Right cardiac atrium (tissue), 5 donors: ENCODE measurements at regions of chr11 and their contacts with region 1.

Region 1: GRCh38 chr11:61679893-61680621 is at the start of gene DAGLA:
- DNase-seq: peak; percentile 68 to 90 (median 89)
- ATAC-seq: peak; percentile 73 to 80
- H3K4me3 ChIP-seq: peak within 1 kb of the TSS; percentile 55
- H3K27ac ChIP-seq: no peak within 1 kb of the TSS
- H3K4me1 ChIP-seq: peaks cover 7% of the 10 kb centered on the region
- H3K27me3 ChIP-seq: no peaks in the 10 kb centered on the region
- total RNA-seq, gene DAGLA: 4.1 to 7.2 (median 6.1) TPM

Region 2: GRCh38 chr11:61446211-61446651 is 233.8 kb before region 1 on chr11:
- intact Hi-C with region 1: no loop called
- DNase-seq: peak; percentile 93 to 97 (median 96)
- ATAC-seq: peak; percentile 89
- H3K4me3 ChIP-seq: no peak overlapping the region
- H3K27ac ChIP-seq: peak overlapping the region; percentile 78
- H3K4me1 ChIP-seq: peaks cover 9% of the 10 kb centered on the region
- H3K27me3 ChIP-seq: no peaks in the 10 kb centered on the region

Region 3: GRCh38 chr11:61733120-61733978 is 53.3 kb after region 1 on chr11:
- intact Hi-C with region 1: loop called (anchors 2 to 5 kb)
- DNase-seq: peak; percentile 88 to 97 (median 95)
- ATAC-seq: peak; percentile 77 to 79
- H3K4me3 ChIP-seq: no peak overlapping the region
- H3K27ac ChIP-seq: peak overlapping the region; percentile 46
- H3K4me1 ChIP-seq: peaks cover 3% of the 10 kb centered on the region
- H3K27me3 ChIP-seq: no peaks in the 10 kb centered on the region

Region 4: DNA sequence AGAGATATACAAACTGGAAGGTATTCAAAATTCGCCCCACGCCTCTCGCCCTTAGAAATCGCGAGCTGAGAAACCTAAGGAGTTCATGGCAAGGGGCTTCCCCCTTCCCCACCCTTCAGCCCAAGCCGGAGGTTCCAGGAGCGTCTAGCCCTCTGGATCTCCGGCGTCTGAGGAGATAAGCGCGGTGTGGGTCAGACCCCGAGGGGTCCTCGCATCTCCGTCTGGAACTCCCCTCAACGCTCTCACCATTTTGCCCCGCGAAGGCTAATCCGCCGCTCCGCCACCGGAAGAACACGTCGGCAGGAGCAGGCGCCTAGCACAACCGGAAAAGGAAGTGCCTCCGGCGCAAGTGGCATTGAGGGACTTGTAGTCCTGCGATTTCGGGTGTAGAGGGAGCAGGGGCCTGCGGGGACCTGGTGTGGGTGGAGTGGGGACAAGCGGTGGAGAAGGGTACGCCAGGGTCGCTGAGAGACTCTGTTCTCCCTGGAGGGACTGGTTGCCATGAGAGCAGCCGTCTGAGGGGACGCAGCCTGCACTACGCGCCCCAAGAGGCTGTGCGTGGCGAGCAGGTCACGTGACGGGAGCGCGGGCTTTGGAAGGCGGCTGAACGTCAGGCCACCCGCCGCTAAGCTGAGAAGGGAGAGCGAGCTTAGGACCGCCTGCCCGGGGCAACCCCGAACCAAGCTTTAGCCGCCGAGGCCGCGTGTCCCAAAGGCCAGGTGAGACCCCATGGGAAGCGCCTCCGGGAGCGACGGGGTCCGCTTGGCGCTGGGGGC is 112.4 kb after region 1 on chr11 and contains the starts of genes FEN1 and TMEM258:
- intact Hi-C with region 1: no loop called
- DNase-seq: peak; percentile 91 to 95 (median 94)
- ATAC-seq: peak; percentile 93
- H3K4me3 ChIP-seq: peak within 1 kb of the TSS; percentile 93
- H3K27ac ChIP-seq: peak within 1 kb of the TSS; percentile 97
- H3K4me1 ChIP-seq: no peaks in the 10 kb centered on the region
- H3K27me3 ChIP-seq: no peaks in the 10 kb centered on the region
- total RNA-seq, gene FEN1: 4.6 to 5.4 (median 5.1) TPM
- total RNA-seq, gene TMEM258: 107 to 113 (median 111) TPM